A549 (cell line): ENCODE measurements at regions of chr10 and their contacts with region 1.

Region 1: GRCh38 chr10:69957886-69958555 is 94.6 kb upstream of the MACROH2A2 start:
- DNase-seq: peak; percentile 61 to 82
- ATAC-seq: peak; percentile 47 to 87; a peak in 5 of 6 replicates
- H3K4me3 ChIP-seq: no peak overlapping the region
- H3K27ac ChIP-seq: no peak overlapping the region
- H3K4me1 ChIP-seq: no peaks in the 10 kb centered on the region
- CTCF ChIP-seq: peak; percentile 69
- EP300 ChIP-seq: no peak
- POLR2A ChIP-seq: no peak
- RAD21 ChIP-seq: peak; percentile 47 to 71; a peak in 4 of 5 replicates

Region 2: DNA sequence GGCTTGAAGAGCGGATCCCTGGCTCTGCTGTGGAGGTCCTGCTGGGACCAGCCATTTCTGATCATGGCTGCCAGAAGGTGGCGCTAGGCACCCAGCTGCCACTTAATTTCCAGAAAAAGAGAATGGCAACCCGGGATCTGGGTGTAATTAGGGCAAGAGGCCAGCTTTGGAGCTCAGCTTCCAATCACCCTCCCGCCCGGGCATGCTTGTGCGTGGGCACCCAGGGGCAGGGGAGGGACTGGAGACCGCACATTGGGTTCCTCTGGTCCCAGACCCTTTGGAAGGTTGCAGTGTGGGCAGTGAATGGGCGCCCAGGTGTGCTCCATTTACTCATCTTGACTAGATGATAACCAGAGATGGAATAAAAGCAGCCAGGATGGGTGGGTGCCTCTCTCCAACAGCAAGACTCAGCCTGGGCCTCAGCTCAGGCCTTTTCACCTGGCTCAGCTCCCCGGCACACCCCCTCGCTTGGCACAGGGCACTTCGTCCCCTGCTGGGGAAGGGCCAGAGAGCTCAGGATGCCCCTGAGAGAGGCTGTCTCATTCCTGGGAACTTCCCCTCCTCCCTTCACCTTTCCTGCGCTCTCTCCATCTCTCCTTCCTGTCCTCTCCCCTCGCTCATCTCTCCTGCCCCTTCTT is 313.2 kb before region 1 on chr10:
- CTCF ChIA-PET with region 1: interaction called, 17 read pairs
- POLR2A ChIA-PET with region 1: no interaction called
- DNase-seq: peak; percentile 48 to 90
- ATAC-seq: peak; percentile 49 to 89; a peak in 5 of 6 replicates
- H3K4me3 ChIP-seq: no peak overlapping the region
- H3K27ac ChIP-seq: no peak overlapping the region
- H3K4me1 ChIP-seq: no peaks in the 10 kb centered on the region
- CTCF ChIP-seq: peak; percentile 83
- EP300 ChIP-seq: no peak
- POLR2A ChIP-seq: no peak
- RAD21 ChIP-seq: peak; percentile 84 to 93

Region 3: GRCh38 chr10:69925111-69925510 is 32.9 kb before region 1 on chr10:
- CTCF ChIA-PET with region 1: interaction called, 12 read pairs
- POLR2A ChIA-PET with region 1: no interaction called
- DNase-seq: no peak
- ATAC-seq: no peak
- H3K4me3 ChIP-seq: no peak overlapping the region
- H3K27ac ChIP-seq: no peak overlapping the region
- H3K4me1 ChIP-seq: no peaks in the 10 kb centered on the region
- CTCF ChIP-seq: no peak
- EP300 ChIP-seq: no peak
- POLR2A ChIP-seq: no peak
- RAD21 ChIP-seq: no peak

Region 4: GRCh38 chr10:69944761-69945160 is 13.3 kb before region 1 on chr10:
- CTCF ChIA-PET with region 1: interaction called, 18 read pairs
- POLR2A ChIA-PET with region 1: no interaction called
- DNase-seq: no peak
- ATAC-seq: peak in 1 of 2 experiments; percentile 41; a peak in 1 of 6 replicates
- H3K4me3 ChIP-seq: no peak overlapping the region
- H3K27ac ChIP-seq: no peak overlapping the region
- H3K4me1 ChIP-seq: no peaks in the 10 kb centered on the region
- CTCF ChIP-seq: no peak
- EP300 ChIP-seq: no peak
- POLR2A ChIP-seq: no peak
- RAD21 ChIP-seq: no peak

Region 5: GRCh38 chr10:69974551-69975155 is 16.6 kb after region 1 on chr10:
- CTCF ChIA-PET with region 1: interaction called, 28 read pairs
- POLR2A ChIA-PET with region 1: no interaction called
- DNase-seq: no peak
- ATAC-seq: no peak
- H3K4me3 ChIP-seq: no peak overlapping the region
- H3K27ac ChIP-seq: no peak overlapping the region
- H3K4me1 ChIP-seq: no peaks in the 10 kb centered on the region
- CTCF ChIP-seq: no peak
- EP300 ChIP-seq: no peak
- POLR2A ChIP-seq: no peak
- RAD21 ChIP-seq: no peak